CD14-positive monocyte (primary cell): ENCODE measurements at regions of chr1 and their contacts with region 1.

Region 1: DNA sequence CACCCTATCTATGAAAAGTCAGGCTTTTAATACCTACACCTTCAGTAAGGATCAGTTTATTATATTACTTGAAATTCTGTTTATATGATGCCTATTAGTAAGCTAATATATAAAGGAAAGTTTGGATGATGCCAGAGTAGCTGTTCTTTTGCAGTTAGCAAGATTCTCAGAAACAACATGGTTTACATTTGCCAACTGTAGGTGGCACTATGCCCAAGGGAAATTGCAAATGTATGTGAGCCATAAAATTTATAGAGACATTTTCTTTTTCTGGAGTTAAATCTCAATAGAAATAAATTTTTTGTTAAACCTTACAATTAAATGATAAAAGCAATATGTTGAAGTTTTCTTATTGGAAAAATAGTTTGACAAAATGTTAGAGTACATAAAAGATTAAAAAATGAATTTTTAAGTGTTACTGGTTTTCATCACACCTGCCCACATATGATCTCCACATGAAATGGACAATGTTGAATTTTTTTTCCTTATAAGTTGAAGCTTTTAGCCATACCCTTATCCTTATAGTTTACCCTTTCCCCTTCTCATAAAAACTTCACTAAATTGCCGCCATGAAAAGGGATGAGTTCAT is 32.1 kb upstream of the EPHX4 start:
- DNase-seq: peak; percentile 8 to 28 (median 21)
- H3K4me3 ChIP-seq: no peak overlapping the region
- H3K4me3 Mint-ChIP-seq: no peak overlapping the region
- H3K27ac ChIP-seq: no peak overlapping the region
- H3K27ac Mint-ChIP-seq: no peak overlapping the region
- H3K4me1 ChIP-seq: no peaks in the 10 kb centered on the region
- H3K4me1 Mint-ChIP-seq: no peaks in the 10 kb centered on the region
- H3K27me3 ChIP-seq: no peaks in the 10 kb centered on the region
- H3K27me3 Mint-ChIP-seq: peaks cover 0 to 4% (median 0%) of the 10 kb centered on the region in 3 donors
- CTCF ChIP-seq: peak; percentile 74

Region 2: GRCh38 chr1:92051948-92052347 is 54.2 kb after region 1 on chr1:
- intact Hi-C with region 1: no loop called
- DNase-seq: no peak
- H3K4me3 ChIP-seq: no peak overlapping the region
- H3K4me3 Mint-ChIP-seq: no peak overlapping the region
- H3K27ac ChIP-seq: no peak overlapping the region
- H3K27ac Mint-ChIP-seq: no peak overlapping the region
- H3K4me1 ChIP-seq: peaks cover 0 to 6% of the 10 kb centered on the region in 2 donors
- H3K4me1 Mint-ChIP-seq: peaks cover 6% of the 10 kb centered on the region
- H3K27me3 ChIP-seq: no peaks in the 10 kb centered on the region
- H3K27me3 Mint-ChIP-seq: peaks cover 0 to 2% (median 2%) of the 10 kb centered on the region in 3 donors
- CTCF ChIP-seq: no peak

Region 3: DNA sequence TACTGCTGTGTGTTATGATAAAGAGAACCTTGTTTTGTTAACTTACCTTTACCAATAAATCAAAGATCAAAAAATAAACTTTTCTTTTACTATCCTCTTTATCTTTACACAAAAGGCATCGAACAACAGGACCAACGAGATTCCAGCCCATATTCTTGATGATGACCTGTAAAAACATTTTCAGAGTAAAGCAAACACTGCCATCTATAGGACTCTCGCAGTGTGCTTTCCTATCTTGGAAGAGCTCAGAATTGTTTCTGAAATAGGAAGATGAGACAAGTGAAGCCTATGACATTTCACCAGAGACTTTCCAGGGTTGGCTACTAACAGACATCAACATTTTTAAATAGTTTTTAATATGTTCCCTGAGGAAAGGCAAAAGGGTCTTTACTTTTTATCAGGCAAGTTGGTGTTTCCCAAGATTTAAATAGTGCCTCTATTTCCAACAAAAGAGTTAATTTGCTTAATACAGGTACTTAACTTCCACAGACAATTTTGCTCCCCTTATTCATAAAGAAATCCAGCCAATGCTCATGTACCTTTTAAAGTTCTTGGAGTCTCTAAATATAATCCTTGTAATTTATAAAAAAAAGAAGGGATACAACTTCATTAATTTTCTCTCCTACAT is 293.8 kb after region 1 on chr1:
- intact Hi-C with region 1: loop called in 1 of 2 experiments (anchors 5 kb)
- DNase-seq: peak in 2 of 3 donors; percentile 17 to 38
- H3K4me3 ChIP-seq: no peak overlapping the region
- H3K4me3 Mint-ChIP-seq: no peak overlapping the region
- H3K27ac ChIP-seq: no peak overlapping the region
- H3K27ac Mint-ChIP-seq: no peak overlapping the region
- H3K4me1 ChIP-seq: no peaks in the 10 kb centered on the region
- H3K4me1 Mint-ChIP-seq: peaks cover 5% of the 10 kb centered on the region
- H3K27me3 ChIP-seq: no peaks in the 10 kb centered on the region
- H3K27me3 Mint-ChIP-seq: no peaks in the 10 kb centered on the region
- CTCF ChIP-seq: peak; percentile 62